HCT116 (cell line): ENCODE measurements at regions of chr11 and their contacts with region 1.

Region 1: DNA sequence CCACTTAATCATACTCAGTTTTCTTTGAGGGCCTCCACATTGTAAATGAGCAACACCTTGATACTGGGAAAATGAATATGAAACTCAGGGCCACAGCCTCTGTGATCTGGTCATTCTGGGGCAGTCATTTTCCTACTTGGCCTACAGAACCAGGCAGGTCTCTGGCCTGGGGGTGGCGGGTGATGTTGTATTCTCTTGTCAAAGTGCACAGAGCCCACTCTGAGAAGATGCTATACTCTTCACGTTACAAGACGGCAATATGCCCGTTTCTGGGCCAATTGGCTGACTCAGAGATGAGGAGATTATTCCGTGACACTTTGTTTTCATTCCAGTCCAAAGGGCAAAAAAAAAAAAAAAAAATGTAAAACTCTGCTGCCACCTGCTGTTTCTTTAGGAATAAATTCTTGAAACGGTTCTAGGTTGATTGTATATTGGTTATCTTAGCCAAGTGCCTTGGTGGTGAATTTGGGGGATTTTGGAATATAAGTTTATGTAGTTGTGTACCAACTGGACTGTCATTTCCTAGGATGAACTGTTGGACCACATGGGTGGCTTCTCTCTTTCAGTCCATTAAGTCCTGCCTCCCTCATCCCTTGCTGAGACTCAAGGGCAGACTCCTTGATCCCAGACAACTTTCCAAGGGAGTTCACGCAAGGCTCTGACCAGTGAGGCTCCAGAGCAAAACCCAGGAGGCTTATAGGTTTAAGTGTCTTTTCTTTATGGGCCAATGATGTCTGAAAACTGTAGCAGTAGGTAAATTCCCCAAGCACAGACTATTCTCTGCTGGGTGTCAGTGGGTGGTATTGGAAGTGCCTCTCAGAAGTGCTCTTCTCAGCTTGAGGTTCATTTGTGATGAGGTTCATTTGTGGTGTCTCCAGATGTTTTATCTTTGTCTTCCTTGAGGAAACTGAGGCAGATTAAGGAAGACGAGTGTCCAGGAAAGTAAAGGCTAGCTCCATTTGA is 18.2 kb downstream of the ADM start:
- DNase-seq: peak; percentile 81
- ATAC-seq: peak; percentile 76
- H3K4me3 ChIP-seq: peak overlapping the region; percentile 8 to 32
- H3K27ac ChIP-seq: no peak overlapping the region
- H3K4me1 ChIP-seq: peaks cover 12 to 21% of the 10 kb centered on the region in 2 experiments; a peak in 3 of 4 replicates
- H3K27me3 ChIP-seq: no peaks in the 10 kb centered on the region
- CTCF ChIP-seq: peak; percentile 25 to 87 (median 66); a peak in 5 of 6 replicates
- POLR2A ChIP-seq: no peak
- RAD21 ChIP-seq: peak; percentile 89

Region 2: GRCh38 chr11:9757809-9758636 is 565.1 kb before region 1 on chr11:
- CTCF ChIA-PET with region 1: interaction called, 5 read pairs
- POLR2A ChIA-PET with region 1: no interaction called
- RAD21 ChIA-PET with region 1: no interaction called
- intact Hi-C with region 1: loop called (anchors 1 kb)
- DNase-seq: peak; percentile 42
- ATAC-seq: peak; percentile 59
- H3K4me3 ChIP-seq: peak overlapping the region; percentile 71 to 74
- H3K27ac ChIP-seq: peak overlapping the region; percentile 95
- H3K4me1 ChIP-seq: peaks cover 17 to 34% of the 10 kb centered on the region in 2 experiments
- H3K27me3 ChIP-seq: no peaks in the 10 kb centered on the region
- CTCF ChIP-seq: peak in 2 of 3 experiments; percentile 55 to 66; a peak in 4 of 6 replicates
- POLR2A ChIP-seq: no peak
- RAD21 ChIP-seq: peak; percentile 65

Region 3: DNA sequence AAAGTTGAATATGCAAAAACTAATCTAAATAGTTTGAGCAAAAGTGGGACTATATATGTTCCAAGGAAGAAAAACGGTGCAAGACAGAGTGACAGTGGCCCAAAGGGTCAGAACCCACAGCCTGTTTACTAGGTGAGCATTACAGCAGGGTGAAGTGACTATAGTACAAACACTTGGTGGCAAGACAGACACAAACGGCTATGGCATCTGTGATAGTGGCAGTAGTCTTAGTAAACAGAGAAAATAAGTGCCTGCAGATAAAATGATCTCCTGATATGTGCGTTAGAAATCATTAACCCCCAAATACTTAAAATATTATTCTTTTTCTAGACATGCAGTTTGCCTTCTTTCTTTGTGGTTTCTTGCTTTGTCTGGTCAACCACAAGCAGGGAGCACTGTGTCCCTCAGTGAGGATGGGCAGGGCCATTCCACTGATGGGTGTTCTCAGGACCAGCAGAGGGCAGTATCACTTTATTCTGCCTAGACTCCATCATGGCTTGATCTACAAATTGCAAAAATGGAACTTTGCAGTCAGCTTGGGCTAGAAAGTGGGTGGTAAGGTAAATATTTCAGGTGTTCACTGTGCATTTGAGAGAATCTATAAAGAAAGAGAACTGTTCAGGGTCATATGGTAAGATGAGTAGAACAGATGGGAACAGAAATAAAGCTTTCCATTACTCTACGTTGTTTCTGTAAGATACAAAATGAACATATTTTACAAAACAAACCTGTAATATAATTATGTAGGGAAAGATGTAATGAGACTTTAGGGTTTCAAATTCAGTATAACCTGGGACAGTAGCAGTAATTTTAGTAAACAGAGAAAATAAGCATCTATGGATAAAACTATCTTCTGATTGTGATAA is 461.0 kb before region 1 on chr11:
- CTCF ChIA-PET with region 1: no interaction called
- POLR2A ChIA-PET with region 1: no interaction called
- RAD21 ChIA-PET with region 1: no interaction called
- intact Hi-C with region 1: loop called (anchors 1 kb)
- DNase-seq: peak; percentile 31
- ATAC-seq: peak; percentile 98
- H3K4me3 ChIP-seq: no peak overlapping the region
- H3K27ac ChIP-seq: no peak overlapping the region
- H3K4me1 ChIP-seq: no peaks in the 10 kb centered on the region; a peak in 1 of 4 replicates
- H3K27me3 ChIP-seq: no peaks in the 10 kb centered on the region
- CTCF ChIP-seq: peak; percentile 78 to 90 (median 82)
- POLR2A ChIP-seq: no peak
- RAD21 ChIP-seq: peak; percentile 86

Region 4: DNA sequence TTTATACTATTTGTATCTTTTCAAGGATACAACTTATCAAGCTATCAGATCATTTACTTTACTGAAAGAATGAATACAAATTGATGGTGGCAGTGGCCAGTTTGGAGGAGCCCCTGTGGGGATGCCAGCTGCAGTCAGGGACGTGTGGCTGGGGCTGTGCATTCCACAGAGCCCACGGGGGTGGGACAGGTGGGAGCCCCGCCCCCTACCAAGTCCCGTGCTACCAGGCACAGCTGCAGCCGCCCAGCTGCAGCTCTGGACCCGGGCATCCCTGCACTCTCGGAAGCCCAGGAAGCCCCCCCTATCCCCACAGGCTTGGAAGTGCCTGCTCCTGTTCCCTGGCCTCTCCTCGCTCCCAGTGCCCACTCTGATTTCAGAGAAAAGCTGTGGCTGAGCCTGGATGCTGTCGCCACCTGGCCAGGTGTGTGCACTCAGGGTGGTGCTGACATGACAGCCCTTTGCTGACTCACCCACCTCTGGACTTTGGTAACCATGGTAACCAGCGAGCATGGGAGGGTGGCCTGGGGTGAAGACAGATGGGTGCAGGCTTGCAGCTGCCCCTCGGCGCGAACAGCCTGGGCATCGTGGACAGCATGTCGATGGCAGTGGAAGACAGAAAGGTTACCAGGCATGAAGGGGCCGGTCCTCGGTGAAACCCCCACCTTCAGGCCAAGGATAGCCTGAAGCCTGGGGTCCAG is 167.2 kb before region 1 on chr11:
- CTCF ChIA-PET with region 1: no interaction called
- POLR2A ChIA-PET with region 1: no interaction called
- RAD21 ChIA-PET with region 1: no interaction called
- intact Hi-C with region 1: no loop called
- DNase-seq: peak; percentile 0
- ATAC-seq: peak; percentile 38; the same call in 1 of the 2 replicates
- H3K4me3 ChIP-seq: no peak overlapping the region
- H3K27ac ChIP-seq: no peak overlapping the region
- H3K4me1 ChIP-seq: peaks cover 0 to 9% of the 10 kb centered on the region in 2 experiments; a peak in 2 of 4 replicates
- H3K27me3 ChIP-seq: no peaks in the 10 kb centered on the region
- CTCF ChIP-seq: no peak
- POLR2A ChIP-seq: no peak
- RAD21 ChIP-seq: no peak

Region 5: DNA sequence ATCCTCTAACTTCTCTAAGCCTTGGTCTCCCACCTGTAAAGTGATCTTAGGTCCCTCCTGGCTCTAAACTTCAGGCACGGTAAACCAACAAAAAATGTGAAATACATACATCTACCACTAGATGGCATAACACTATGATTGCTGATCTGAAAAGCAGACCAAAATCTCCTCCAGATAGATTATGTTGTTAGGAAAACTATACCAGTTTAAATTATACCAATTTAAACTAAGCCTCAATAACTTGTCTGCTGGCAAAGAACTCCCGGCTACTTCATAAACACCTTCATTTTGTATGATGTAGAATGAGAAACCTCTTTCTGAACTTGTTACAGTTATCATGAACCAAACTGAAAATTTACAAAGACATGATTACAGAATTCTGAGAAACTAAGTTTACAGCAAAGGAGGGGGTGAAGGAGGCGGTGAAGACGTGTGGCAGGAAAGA is 115.0 kb before region 1 on chr11:
- CTCF ChIA-PET with region 1: no interaction called
- POLR2A ChIA-PET with region 1: no interaction called
- RAD21 ChIA-PET with region 1: no interaction called
- intact Hi-C with region 1: loop called (anchors 1 kb)
- DNase-seq: peak; percentile 58
- ATAC-seq: peak; percentile 78
- H3K4me3 ChIP-seq: no peak overlapping the region
- H3K27ac ChIP-seq: no peak overlapping the region
- H3K4me1 ChIP-seq: peaks cover 0 to 8% of the 10 kb centered on the region in 2 experiments; a peak in 1 of 4 replicates
- H3K27me3 ChIP-seq: no peaks in the 10 kb centered on the region
- CTCF ChIP-seq: peak; percentile 54 to 73 (median 57); a peak in 5 of 6 replicates
- POLR2A ChIP-seq: no peak
- RAD21 ChIP-seq: peak; percentile 65

Region 6: DNA sequence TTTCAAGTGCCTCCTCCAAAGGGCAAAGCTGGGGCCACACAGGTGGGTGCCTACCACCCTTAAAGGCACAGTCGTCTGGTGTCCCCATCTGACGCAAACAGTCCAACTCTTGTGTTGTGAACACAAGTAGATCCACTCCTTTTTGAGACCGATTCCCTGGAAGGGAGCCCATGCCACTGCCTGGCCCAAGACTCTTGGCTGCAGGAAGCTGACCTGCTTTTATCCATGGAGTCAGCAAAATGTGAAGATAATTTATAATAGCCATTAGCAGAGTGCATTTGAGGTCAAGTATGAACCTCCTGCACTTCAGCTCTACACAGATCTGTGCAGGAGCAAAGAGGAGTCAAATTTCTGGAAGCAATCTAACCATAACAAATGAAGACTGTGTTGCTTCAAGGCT is 50.2 kb after region 1 on chr11:
- CTCF ChIA-PET with region 1: no interaction called
- POLR2A ChIA-PET with region 1: no interaction called
- RAD21 ChIA-PET with region 1: no interaction called
- intact Hi-C with region 1: no loop called
- DNase-seq: no peak
- ATAC-seq: no peak
- H3K4me3 ChIP-seq: no peak overlapping the region
- H3K27ac ChIP-seq: no peak overlapping the region
- H3K4me1 ChIP-seq: peaks cover 3 to 5% of the 10 kb centered on the region in 2 experiments; a peak in 3 of 4 replicates
- H3K27me3 ChIP-seq: no peaks in the 10 kb centered on the region
- CTCF ChIP-seq: no peak
- POLR2A ChIP-seq: no peak
- RAD21 ChIP-seq: no peak